Activated naive CD4-positive, alpha-beta T cell treated with anti-CD3 and anti-CD28 coated beads, Interleukin-2, amount 10 ng/mL, durations not matched to agents 7 days and 5 days (primary cell): ENCODE measurements at regions of chr12 and their contacts with region 1.

Region 1: GRCh38 chr12:14417715-14418114 is 52.2 kb downstream of the ATF7IP start:
- DNase-seq: peak; percentile 84
- H3K4me3 Mint-ChIP-seq: peak overlapping the region; percentile 67
- H3K27ac Mint-ChIP-seq: peak overlapping the region; percentile 92
- H3K4me1 Mint-ChIP-seq: peaks cover 55% of the 10 kb centered on the region
- H3K27me3 Mint-ChIP-seq: no peaks in the 10 kb centered on the region

Region 2: DNA sequence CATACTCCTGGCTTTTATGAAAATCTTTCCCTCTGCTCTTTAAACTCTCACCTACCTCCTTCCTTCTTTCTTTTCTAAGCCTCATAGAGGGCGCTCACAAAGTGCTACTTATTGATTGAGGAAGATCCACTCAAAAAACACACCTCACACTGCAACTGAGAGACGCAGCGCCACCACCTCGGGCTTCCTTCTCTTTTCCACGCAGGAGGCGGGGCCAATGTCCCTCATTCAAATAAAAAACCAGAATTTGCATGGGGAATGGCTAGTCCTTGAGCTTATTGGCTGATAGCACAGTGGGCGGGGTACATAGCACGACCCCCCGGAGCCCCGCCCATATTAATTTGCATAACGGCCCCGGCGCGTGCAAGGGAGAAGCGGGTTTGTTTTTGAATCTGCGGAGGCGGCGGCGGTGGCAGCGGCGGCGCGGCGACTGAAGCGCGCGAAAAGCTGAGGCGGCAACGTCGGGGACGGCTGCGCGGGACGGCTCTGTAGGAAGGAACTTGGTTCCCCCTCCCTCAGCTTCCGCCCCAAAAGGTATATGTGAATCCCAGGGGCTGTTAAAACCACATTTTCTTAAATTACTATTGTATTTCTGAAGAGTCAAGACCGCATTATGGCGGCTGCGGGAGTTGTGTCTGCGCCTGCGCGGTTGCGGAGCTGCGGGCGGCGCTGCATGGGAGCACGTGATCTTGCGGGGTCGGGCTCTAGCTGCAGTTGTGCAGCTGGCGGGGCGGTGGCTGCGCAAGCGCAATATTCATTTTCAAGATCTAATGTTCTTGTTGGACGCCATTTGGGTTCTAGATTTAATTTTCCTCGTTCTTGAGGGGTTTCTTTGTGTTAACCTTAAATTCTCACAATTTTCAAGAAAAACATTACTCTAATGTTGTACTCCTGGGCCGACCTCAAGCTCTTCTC is 52.2 kb before region 1 on chr12 and contains the start of gene ATF7IP:
- CTCF ChIA-PET with region 1: interaction called, 17 read pairs
- DNase-seq: peak; percentile 97
- H3K4me3 Mint-ChIP-seq: peak within 1 kb of the TSS; percentile 81
- H3K27ac Mint-ChIP-seq: peak within 1 kb of the TSS; percentile 100
- H3K4me1 Mint-ChIP-seq: peaks cover 34% of the 10 kb centered on the region
- H3K27me3 Mint-ChIP-seq: no peaks in the 10 kb centered on the region

Region 3: GRCh38 chr12:14384783-14385638 is 32.7 kb before region 1 on chr12:
- CTCF ChIA-PET with region 1: interaction called, 17 read pairs
- DNase-seq: peak; percentile 81
- H3K4me3 Mint-ChIP-seq: peak overlapping the region; percentile 75
- H3K27ac Mint-ChIP-seq: peak overlapping the region; percentile 98
- H3K4me1 Mint-ChIP-seq: peaks cover 55% of the 10 kb centered on the region
- H3K27me3 Mint-ChIP-seq: no peaks in the 10 kb centered on the region

Region 4: GRCh38 chr12:14394317-14395073 is 23.2 kb before region 1 on chr12:
- CTCF ChIA-PET with region 1: interaction called, 10 read pairs
- DNase-seq: peak; percentile 58
- H3K4me3 Mint-ChIP-seq: peak overlapping the region; percentile 87
- H3K27ac Mint-ChIP-seq: peak overlapping the region; percentile 99
- H3K4me1 Mint-ChIP-seq: peaks cover 82% of the 10 kb centered on the region
- H3K27me3 Mint-ChIP-seq: no peaks in the 10 kb centered on the region

Region 5: DNA sequence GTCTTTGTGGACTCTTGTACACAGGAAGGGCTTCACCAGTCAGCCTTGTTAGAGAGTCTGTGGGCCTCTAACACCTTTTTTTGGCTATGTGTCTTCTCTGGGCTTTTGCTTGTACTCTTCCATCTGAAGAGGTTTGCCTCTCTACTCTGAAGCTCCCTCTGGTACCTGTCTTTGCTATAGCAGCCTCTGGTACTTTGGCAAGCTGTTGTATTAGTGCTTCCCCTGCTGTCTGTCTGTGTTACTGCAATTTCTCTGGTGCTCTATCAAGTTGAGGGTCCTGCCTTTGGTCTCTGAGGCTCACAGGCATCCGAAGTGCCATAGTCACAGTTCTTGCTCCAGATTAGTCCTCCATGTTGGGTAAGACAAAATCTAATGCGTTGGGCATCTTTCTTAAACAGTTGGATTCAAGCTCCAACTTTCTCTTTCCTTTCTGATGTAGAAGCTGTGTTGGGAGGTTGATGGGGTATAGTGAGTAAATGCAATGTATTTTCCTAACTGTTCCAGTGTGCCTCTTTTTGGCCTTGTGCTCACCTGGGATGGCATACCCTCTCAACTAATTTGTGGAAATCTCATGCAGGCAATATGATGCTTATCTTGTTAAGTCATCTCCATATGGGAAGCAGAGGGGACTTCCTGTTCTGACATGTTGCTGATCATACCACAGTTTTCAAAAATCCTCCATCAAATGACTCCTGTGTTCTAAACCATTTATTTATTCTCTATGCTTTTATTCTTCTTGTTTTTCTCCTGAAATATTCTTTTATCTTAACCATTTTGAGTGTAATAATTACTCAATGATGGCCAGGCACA is 36.6 kb after region 1 on chr12:
- CTCF ChIA-PET with region 1: interaction called, 12 read pairs
- DNase-seq: peak; percentile 32
- H3K4me3 Mint-ChIP-seq: no peak overlapping the region
- H3K27ac Mint-ChIP-seq: peak overlapping the region; percentile 75
- H3K4me1 Mint-ChIP-seq: peaks cover 49% of the 10 kb centered on the region
- H3K27me3 Mint-ChIP-seq: no peaks in the 10 kb centered on the region

Region 6: DNA sequence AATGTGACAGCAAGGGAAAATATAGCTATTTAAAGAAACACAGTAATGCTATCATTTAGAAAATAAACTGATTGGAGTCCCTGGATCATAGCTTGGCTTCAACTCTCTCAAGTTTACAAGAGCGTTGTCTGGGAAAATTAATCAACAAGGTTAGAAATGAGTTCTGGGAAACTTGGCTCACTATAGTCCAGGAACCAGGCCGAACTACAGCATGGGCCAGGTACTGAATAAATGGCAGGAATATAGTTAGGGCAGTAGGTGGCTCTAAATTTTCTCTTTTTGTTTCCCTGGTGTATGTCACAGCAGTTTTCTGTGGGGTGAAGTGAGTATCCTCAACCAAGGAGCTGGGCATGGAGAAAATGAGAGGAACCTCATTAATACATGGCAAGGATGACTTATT is 77.6 kb after region 1 on chr12:
- CTCF ChIA-PET with region 1: no interaction called
- DNase-seq: no peak
- H3K4me3 Mint-ChIP-seq: no peak overlapping the region
- H3K27ac Mint-ChIP-seq: no peak overlapping the region
- H3K4me1 Mint-ChIP-seq: peaks cover 4% of the 10 kb centered on the region
- H3K27me3 Mint-ChIP-seq: no peaks in the 10 kb centered on the region